ENCODE measurements at regions of chr10 and their contacts with region 1.

Region 1: GRCh38 chr10:88270871-88271713 is 312.0 kb downstream of the RNLS start:
- DNase-seq: peak; percentile 65
- ATAC-seq: peak; percentile 93
- H3K4me3 Mint-ChIP-seq: no peak overlapping the region
- H3K27ac Mint-ChIP-seq: peak overlapping the region; percentile 64
- H3K4me1 Mint-ChIP-seq: peaks cover 37% of the 10 kb centered on the region
- H3K27me3 Mint-ChIP-seq: peaks cover 3% of the 10 kb centered on the region

Region 2: GRCh38 chr10:88064608-88065382 is 206.3 kb before region 1 on chr10:
- CTCF ChIA-PET with region 1: no interaction called
- POLR2A ChIA-PET with region 1: no interaction called
- intact Hi-C with region 1: loop called (anchors 1 to 2 kb)
- DNase-seq: peak; percentile 52
- ATAC-seq: peak; percentile 49
- H3K4me3 Mint-ChIP-seq: no peak overlapping the region
- H3K27ac Mint-ChIP-seq: no peak overlapping the region
- H3K4me1 Mint-ChIP-seq: peaks cover 69% of the 10 kb centered on the region
- H3K27me3 Mint-ChIP-seq: peaks cover 24% of the 10 kb centered on the region

Region 3: GRCh38 chr10:88194041-88194887 is 76.8 kb before region 1 on chr10:
- CTCF ChIA-PET with region 1: no interaction called
- POLR2A ChIA-PET with region 1: no interaction called
- intact Hi-C with region 1: loop called (anchors 1 to 2 kb)
- DNase-seq: peak; percentile 31
- ATAC-seq: peak; percentile 96
- H3K4me3 Mint-ChIP-seq: no peak overlapping the region
- H3K27ac Mint-ChIP-seq: peak overlapping the region; percentile 27
- H3K4me1 Mint-ChIP-seq: peaks cover 38% of the 10 kb centered on the region
- H3K27me3 Mint-ChIP-seq: no peaks in the 10 kb centered on the region

Region 4: GRCh38 chr10:89207181-89207800 is 936.2 kb after region 1 on chr10 and contains the start of gene CH25H:
- CTCF ChIA-PET with region 1: no interaction called
- POLR2A ChIA-PET with region 1: no interaction called
- intact Hi-C with region 1: no loop called
- DNase-seq: peak; percentile 76
- ATAC-seq: peak; percentile 76
- H3K4me3 Mint-ChIP-seq: peak within 1 kb of the TSS; percentile 69
- H3K27ac Mint-ChIP-seq: no peak within 1 kb of the TSS
- H3K4me1 Mint-ChIP-seq: peaks cover 10% of the 10 kb centered on the region
- H3K27me3 Mint-ChIP-seq: peaks cover 35% of the 10 kb centered on the region
- total RNA-seq, gene CH25H: not detected